Activated CD4-positive, alpha-beta T cell treated with anti-CD3 and anti-CD28 coated beads for 36 hours (primary cell): ENCODE measurements at regions of chr6 and their contacts with region 1.

Region 1: GRCh38 chr6:134938896-134939295 is 11.0 kb downstream of the ALDH8A1 start:
- DNase-seq: peak; percentile 83
- ATAC-seq: peak; percentile 98
- H3K4me3 Mint-ChIP-seq: no peak overlapping the region
- H3K27ac Mint-ChIP-seq: peak overlapping the region; percentile 44
- H3K4me1 Mint-ChIP-seq: peaks cover 11% of the 10 kb centered on the region
- H3K27me3 Mint-ChIP-seq: no peaks in the 10 kb centered on the region

Region 2: GRCh38 chr6:134161036-134161435 is 777.9 kb before region 1 on chr6:
- CTCF ChIA-PET with region 1: interaction called, 21 read pairs
- POLR2A ChIA-PET with region 1: no interaction called
- intact Hi-C with region 1: loop called in 1 of 2 experiments (anchors 1 kb)
- DNase-seq: no peak
- ATAC-seq: no peak
- H3K4me3 Mint-ChIP-seq: no peak overlapping the region
- H3K27ac Mint-ChIP-seq: no peak overlapping the region
- H3K4me1 Mint-ChIP-seq: no peaks in the 10 kb centered on the region
- H3K27me3 Mint-ChIP-seq: no peaks in the 10 kb centered on the region

Region 3: DNA sequence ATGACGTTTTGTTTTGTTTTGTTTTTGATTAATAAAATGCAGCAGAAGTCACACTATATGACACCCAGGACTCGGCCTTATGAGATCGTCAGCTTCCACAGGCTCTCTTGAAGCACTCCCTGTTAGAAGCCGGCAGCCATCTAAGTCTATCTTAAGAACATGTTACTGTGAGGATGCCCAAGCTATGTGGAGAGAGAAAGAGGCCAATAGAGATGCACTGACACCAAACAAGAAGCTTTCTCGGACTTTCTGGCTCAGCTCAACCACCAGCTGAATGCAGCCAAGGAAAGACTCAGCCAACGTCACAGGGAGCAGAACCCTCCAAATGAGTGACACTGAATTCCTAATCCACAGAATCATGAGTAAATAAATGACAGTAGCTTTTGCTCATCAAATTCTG is 635.0 kb before region 1 on chr6:
- CTCF ChIA-PET with region 1: no interaction called
- POLR2A ChIA-PET with region 1: no interaction called
- intact Hi-C with region 1: no loop called
- DNase-seq: no peak
- ATAC-seq: no peak
- H3K4me3 Mint-ChIP-seq: no peak overlapping the region
- H3K27ac Mint-ChIP-seq: no peak overlapping the region
- H3K4me1 Mint-ChIP-seq: peaks cover 4% of the 10 kb centered on the region
- H3K27me3 Mint-ChIP-seq: no peaks in the 10 kb centered on the region

Region 4: DNA sequence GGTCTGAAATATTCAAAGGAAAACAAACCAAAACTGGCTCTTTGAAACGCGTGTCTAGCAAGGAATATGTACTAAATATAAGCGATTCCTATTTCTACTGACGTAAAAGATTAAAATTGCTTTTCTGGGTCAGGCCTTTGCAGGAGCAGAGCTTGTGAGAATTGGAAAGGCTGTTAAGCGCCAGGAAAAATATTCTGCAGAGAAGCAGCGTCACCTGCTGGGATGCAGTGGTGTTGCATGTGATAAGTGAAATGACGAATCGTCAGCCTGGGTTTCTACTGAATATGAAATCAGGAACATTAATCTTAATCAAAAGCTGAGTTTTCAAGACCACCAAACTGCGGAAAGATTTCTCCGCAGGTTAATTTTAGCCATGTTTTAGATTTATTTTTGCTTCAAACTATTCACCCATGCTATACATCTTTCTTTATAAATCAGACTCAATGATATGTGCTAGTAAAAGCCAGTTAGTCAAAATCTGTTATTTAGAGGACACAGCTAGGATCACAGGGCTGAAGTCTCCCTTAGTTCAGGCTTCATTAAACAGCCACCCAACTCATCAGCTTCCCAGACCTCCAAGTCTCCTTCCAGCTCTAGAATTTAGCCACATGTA is 56.4 kb before region 1 on chr6:
- CTCF ChIA-PET with region 1: interaction called, 25 read pairs
- POLR2A ChIA-PET with region 1: no interaction called
- intact Hi-C with region 1: loop called (anchors 2 to 5 kb)
- DNase-seq: peak; percentile 73
- ATAC-seq: no peak
- H3K4me3 Mint-ChIP-seq: no peak overlapping the region
- H3K27ac Mint-ChIP-seq: no peak overlapping the region
- H3K4me1 Mint-ChIP-seq: no peaks in the 10 kb centered on the region
- H3K27me3 Mint-ChIP-seq: peaks cover 6% of the 10 kb centered on the region

Region 5: DNA sequence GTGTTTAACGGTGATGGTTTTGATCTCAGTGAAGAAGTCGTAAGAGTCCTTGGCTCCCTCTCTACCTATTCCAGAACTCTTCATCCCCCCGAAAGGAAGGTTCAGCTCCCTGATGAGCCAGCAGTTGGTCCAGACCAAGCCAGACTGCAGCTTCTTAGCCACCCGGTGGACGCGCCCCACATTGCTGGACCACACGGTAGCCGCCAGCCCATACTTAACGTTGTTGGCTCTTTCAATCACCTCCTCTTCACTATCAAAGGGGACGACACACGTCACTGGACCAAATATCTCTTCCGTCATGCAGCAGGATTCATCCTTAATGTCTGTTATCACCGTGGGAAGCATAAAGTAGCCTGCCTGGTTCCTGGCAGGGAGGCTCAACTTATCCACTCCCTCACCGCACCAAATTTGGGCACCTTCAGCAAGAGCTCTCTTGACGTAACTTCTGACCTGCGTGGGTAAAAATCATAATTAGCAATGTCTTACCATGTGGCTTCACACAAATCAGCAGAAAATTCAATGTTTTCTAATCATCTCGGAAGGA is 20.4 kb before region 1 on chr6:
- CTCF ChIA-PET with region 1: interaction called, 20 read pairs
- POLR2A ChIA-PET with region 1: no interaction called
- intact Hi-C with region 1: no loop called
- DNase-seq: no peak
- ATAC-seq: no peak
- H3K4me3 Mint-ChIP-seq: no peak overlapping the region
- H3K27ac Mint-ChIP-seq: no peak overlapping the region
- H3K4me1 Mint-ChIP-seq: no peaks in the 10 kb centered on the region
- H3K27me3 Mint-ChIP-seq: no peaks in the 10 kb centered on the region